Sigmoid colon (tissue), 7 donors: ENCODE measurements at regions of chr9 and their contacts with region 1.

Region 1: DNA sequence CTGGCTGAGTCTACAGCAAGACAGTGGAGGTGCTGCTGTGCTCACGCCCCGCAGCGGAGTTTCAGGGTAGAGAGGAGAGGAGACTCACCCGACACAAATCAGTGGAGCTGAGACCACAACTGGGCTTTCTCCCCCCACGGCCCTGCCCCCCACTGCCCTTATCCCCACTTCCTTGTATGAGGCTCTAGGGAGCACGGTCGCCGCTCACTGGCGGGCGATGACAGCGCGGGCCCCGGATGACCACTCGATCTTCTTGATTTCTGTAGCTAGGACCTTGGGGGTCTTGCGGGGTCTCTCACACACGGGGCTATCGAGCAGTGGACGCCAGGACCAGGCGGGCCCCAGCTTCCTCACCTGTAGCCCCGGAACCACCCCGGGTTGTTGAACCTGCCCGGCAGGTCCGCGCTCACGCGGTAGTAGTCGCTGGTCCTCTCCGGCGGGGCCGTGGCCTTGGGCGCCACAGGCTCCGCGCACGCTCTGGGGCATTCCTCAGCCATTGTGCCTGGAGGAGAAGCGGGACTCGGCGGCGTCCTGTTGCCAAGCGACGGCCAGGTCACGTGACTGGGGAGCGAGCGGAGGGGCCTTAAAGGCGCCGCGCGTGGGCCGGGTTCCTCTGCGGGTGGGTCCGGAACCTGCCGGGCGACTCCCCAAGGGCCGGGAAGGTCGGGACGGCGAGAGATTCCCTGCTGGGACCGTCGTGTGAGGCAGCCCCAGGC is 969 bp upstream of the MRPS2 start:
- DNase-seq: peak; percentile 98
- H3K4me3 ChIP-seq: peak overlapping the region; percentile 90 to 97 (median 93)
- H3K27ac ChIP-seq: peak overlapping the region; percentile 82 to 86 (median 86)
- H3K4me1 ChIP-seq: peaks cover 0 to 30% (median 26%) of the 10 kb centered on the region in 4 donors
- H3K27me3 ChIP-seq: no peaks in the 10 kb centered on the region
- CTCF ChIP-seq: no peak
- EP300 ChIP-seq: no peak
- POLR2A ChIP-seq: no peak

Region 2: DNA sequence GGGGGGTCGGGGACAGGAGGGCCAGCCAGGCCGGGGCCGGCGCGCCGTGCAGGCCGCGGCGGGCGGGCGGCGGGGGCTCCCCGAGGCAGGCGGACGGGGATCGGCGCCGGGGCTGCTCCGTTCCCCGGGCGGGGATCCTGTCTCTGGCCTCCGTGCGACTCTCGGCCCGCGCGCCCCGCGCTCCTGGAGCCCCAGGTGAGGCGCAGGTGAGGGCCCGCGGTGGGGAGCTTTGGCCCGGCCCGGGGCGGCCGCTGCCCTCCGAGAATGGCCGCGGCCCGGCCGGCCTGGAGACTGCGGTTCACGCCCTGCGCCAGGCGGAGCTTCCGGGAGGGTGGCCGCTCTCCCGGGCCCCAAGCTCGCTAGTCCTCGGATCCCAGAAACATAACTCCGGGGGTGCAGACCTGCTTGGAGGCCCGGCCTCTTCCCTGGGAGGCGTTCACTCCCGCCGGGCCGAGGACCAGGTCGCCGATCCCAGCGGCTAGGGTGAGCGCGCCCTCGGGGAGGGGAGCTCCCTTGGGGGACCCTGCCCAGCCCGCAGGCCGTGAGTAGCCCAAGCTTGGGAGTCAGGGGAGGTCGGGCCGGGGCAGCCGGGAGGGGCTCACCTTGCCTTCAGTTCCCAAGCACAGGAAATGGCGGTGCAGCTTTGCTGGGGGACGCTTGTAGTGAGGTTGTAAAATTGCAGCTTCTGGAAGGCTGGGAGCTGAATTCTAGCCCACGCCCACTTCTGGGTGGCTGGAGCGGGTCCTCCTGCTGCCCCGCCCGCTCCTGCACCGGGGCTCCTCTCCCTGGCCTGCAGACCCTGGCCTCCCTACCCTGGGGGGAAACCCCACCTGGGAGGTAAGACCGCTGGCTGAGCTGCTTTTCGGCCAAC is 19.2 kb before region 1 on chr9:
- intact Hi-C with region 1: loop called (anchors 2 kb)
- DNase-seq: no peak
- H3K4me3 ChIP-seq: peak overlapping the region; percentile 54 to 86 (median 76)
- H3K27ac ChIP-seq: peak overlapping the region; percentile 40 to 71 (median 54)
- H3K4me1 ChIP-seq: peaks cover 0 to 20% (median 13%) of the 10 kb centered on the region in 4 donors
- H3K27me3 ChIP-seq: no peaks in the 10 kb centered on the region
- CTCF ChIP-seq: no peak
- EP300 ChIP-seq: no peak
- POLR2A ChIP-seq: no peak